Aorta (tissue), 5 donors: ENCODE measurements at regions of chr20 and their contacts with region 1.

Region 1: DNA sequence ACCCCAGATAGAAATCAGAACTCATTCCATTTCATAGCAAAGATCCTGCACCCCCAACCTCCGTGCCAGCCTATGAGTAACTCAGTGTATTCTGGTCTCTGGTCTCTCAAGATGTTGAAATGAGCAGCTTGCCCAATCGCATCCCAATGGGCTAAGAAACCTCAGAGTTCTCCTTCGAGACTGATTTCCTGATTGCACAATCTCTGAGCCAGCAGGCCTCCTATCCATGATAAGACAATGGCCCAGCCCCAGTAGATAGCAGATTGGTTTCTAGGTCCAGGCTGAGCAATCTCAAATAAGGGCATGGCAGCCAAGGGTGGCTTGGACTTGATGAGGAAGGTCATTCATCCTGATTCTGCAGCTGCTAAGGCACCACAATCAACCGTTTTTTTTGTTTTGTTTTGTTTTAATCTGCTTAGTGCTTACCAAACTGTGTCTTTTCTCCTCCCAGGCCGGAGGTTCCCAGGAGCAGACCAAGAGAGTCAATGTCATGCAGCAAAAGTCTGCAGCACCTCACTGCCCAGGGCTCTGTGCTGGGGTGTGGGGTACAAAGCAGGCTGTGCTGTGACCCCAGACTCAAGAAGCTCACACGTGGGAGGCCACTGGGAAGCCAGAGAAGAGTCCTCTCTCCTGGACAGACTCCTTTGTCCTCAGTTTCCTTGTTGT is 125.1 kb upstream of the NXT1 start:
- DNase-seq: peak in 1 of 2 donors; percentile 83
- ATAC-seq: peak; percentile 87
- H3K4me3 ChIP-seq: no peak overlapping the region
- H3K27ac ChIP-seq: no peak overlapping the region
- H3K4me1 ChIP-seq: no peaks in the 10 kb centered on the region
- H3K27me3 ChIP-seq: no peaks in the 10 kb centered on the region

Region 2: DNA sequence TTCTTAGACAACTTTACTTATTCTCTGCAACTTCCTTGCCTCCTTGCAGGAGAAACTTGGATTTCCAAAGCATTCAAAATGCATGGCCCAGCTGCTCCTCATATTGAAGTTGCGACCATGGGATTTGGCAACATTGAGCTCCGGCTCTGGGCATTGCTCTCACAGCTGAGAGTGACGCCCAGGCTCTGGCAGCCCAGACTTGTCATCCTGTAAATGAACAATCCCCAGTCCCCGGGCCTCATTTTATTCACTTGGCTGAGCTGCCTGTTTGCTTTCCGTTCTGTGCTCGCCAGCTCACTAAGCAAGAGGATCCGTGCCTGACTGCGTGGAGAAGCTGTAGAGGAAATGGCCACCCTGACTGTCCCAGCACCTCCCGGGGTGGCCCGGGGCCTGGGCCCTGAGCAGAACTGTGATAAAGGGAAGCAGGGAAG is 19.9 kb before region 1 on chr20:
- intact Hi-C with region 1: loop called in 1 of 2 experiments (anchors 1 kb)
- DNase-seq: peak; percentile 86 to 88
- ATAC-seq: peak; percentile 82
- H3K4me3 ChIP-seq: no peak overlapping the region
- H3K27ac ChIP-seq: peak overlapping the region; percentile 4 to 92
- H3K4me1 ChIP-seq: peaks cover 3 to 5% of the 10 kb centered on the region in 2 donors
- H3K27me3 ChIP-seq: no peaks in the 10 kb centered on the region

Region 3: DNA sequence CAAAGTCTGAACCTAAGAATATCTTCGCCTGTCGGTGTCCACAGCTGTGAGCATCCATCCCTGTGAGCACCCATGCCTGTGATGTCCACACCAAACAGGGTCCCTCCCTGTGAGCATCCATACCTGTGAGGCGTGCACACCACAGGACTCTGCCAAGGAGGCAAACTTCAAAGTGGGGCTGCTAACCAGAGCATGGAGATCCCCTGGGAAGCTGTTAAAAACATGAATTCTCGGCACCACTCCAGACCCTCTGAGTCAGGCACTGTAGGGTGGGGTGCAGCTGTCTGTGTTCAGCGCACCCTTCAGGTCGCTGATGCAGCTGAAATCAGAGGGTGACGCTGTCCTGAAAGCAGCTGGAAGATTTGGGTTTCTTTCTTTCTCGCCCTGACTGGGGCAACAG is 39.7 kb after region 1 on chr20:
- intact Hi-C with region 1: no loop called
- DNase-seq: no peak
- ATAC-seq: no peak
- H3K4me3 ChIP-seq: no peak overlapping the region
- H3K27ac ChIP-seq: no peak overlapping the region
- H3K4me1 ChIP-seq: no peaks in the 10 kb centered on the region
- H3K27me3 ChIP-seq: no peaks in the 10 kb centered on the region